ENCODE measurements at regions of chr3 and their contacts with region 1.

Region 1: GRCh38 chr3:178385280-178385952 is 150.8 kb upstream of the KCNMB2 start:
- DNase-seq: peak in 1 of 3 donors; percentile 54
- ATAC-seq: peak; percentile 52
- H3K4me3 ChIP-seq: no peak overlapping the region
- H3K4me1 ChIP-seq: no peaks in the 10 kb centered on the region
- CTCF ChIP-seq: peak; percentile 35

Region 2: GRCh38 chr3:177041021-177041729 is 1344.2 kb before region 1 on chr3:
- intact Hi-C with region 1: loop called in 1 of 2 experiments (anchors 10 kb)
- DNase-seq: no peak
- ATAC-seq: peak; percentile 56
- H3K4me3 ChIP-seq: no peak overlapping the region
- H3K4me1 ChIP-seq: no peaks in the 10 kb centered on the region
- CTCF ChIP-seq: no peak

Measured in mucosa of descending colon (tissue), 3 donors.